ENCODE measurements at regions of chr12 and their contacts with region 1.

Region 1: GRCh38 chr12:76020731-76021672 is 10.6 kb downstream of the PHLDA1 start:
- DNase-seq: peak; percentile 23 to 91 (median 62)
- ATAC-seq: peak; percentile 79
- H3K4me3 ChIP-seq: peak overlapping the region in 1 of 2 experiments; percentile 9
- H3K4me3 Mint-ChIP-seq: peak overlapping the region; percentile 61
- H3K27ac ChIP-seq: peak overlapping the region; percentile 51 to 86
- H3K27ac Mint-ChIP-seq: peak overlapping the region; percentile 96
- H3K4me1 ChIP-seq: peaks cover 24% of the 10 kb centered on the region
- H3K4me1 Mint-ChIP-seq: peaks cover 24% of the 10 kb centered on the region
- H3K27me3 ChIP-seq: no peaks in the 10 kb centered on the region
- H3K27me3 Mint-ChIP-seq: no peaks in the 10 kb centered on the region
- CTCF ChIP-seq: no peak

Region 2: DNA sequence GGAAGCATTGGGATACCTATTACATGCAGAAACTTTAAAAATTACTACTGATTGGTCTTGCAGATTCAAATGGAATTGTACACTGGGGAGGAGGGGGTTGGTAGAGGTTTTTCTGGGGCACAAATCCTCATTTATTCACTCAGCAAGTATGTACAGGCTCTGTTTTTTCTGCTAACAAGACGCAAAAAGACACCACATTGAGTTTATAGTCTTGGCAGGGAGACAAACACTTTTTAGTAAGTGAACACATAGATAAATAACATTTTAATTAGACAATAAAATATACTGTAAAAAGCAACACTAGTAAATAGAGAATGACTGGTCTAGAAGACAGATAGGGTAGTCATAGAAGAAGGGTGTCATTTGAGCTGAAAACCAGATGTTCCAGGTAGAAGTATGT is 606.3 kb before region 1 on chr12:
- CTCF ChIA-PET with region 1: no interaction called
- POLR2A ChIA-PET with region 1: no interaction called
- intact Hi-C with region 1: no loop called
- DNase-seq: no peak
- ATAC-seq: no peak
- H3K4me3 ChIP-seq: no peak overlapping the region
- H3K4me3 Mint-ChIP-seq: no peak overlapping the region
- H3K27ac ChIP-seq: no peak overlapping the region
- H3K27ac Mint-ChIP-seq: no peak overlapping the region
- H3K4me1 ChIP-seq: no peaks in the 10 kb centered on the region
- H3K4me1 Mint-ChIP-seq: no peaks in the 10 kb centered on the region
- H3K27me3 ChIP-seq: no peaks in the 10 kb centered on the region
- H3K27me3 Mint-ChIP-seq: peaks cover 2% of the 10 kb centered on the region
- CTCF ChIP-seq: no peak

Region 3: GRCh38 chr12:75944097-75944904 is 76.7 kb before region 1 on chr12:
- CTCF ChIA-PET with region 1: no interaction called
- POLR2A ChIA-PET with region 1: no interaction called
- intact Hi-C with region 1: loop called in 1 of 2 experiments (anchors 2 kb)
- DNase-seq: peak in 2 of 9 experiments; percentile 48 to 62
- ATAC-seq: peak; percentile 84
- H3K4me3 ChIP-seq: no peak overlapping the region
- H3K4me3 Mint-ChIP-seq: no peak overlapping the region
- H3K27ac ChIP-seq: peak overlapping the region; percentile 7 to 60
- H3K27ac Mint-ChIP-seq: peak overlapping the region; percentile 89
- H3K4me1 ChIP-seq: peaks cover 11% of the 10 kb centered on the region
- H3K4me1 Mint-ChIP-seq: peaks cover 18% of the 10 kb centered on the region
- H3K27me3 ChIP-seq: no peaks in the 10 kb centered on the region
- H3K27me3 Mint-ChIP-seq: no peaks in the 10 kb centered on the region
- CTCF ChIP-seq: no peak

Region 4: GRCh38 chr12:75977952-75978671 is 42.9 kb before region 1 on chr12:
- CTCF ChIA-PET with region 1: no interaction called
- POLR2A ChIA-PET with region 1: interaction called, 11 read pairs
- intact Hi-C with region 1: loop called (anchors 1 to 2 kb)
- DNase-seq: peak; percentile 27 to 92 (median 75)
- ATAC-seq: peak; percentile 90
- H3K4me3 ChIP-seq: no peak overlapping the region
- H3K4me3 Mint-ChIP-seq: no peak overlapping the region
- H3K27ac ChIP-seq: peak overlapping the region in 1 of 2 experiments; percentile 63
- H3K27ac Mint-ChIP-seq: peak overlapping the region; percentile 71
- H3K4me1 ChIP-seq: peaks cover 23% of the 10 kb centered on the region
- H3K4me1 Mint-ChIP-seq: peaks cover 31% of the 10 kb centered on the region
- H3K27me3 ChIP-seq: no peaks in the 10 kb centered on the region
- H3K27me3 Mint-ChIP-seq: no peaks in the 10 kb centered on the region
- CTCF ChIP-seq: no peak

Region 5: GRCh38 chr12:76176940-76177339 is 155.9 kb after region 1 on chr12:
- CTCF ChIA-PET with region 1: no interaction called
- POLR2A ChIA-PET with region 1: no interaction called
- intact Hi-C with region 1: no loop called
- DNase-seq: no peak
- ATAC-seq: no peak
- H3K4me3 ChIP-seq: no peak overlapping the region
- H3K4me3 Mint-ChIP-seq: no peak overlapping the region
- H3K27ac ChIP-seq: no peak overlapping the region
- H3K27ac Mint-ChIP-seq: no peak overlapping the region
- H3K4me1 ChIP-seq: no peaks in the 10 kb centered on the region
- H3K4me1 Mint-ChIP-seq: no peaks in the 10 kb centered on the region
- H3K27me3 ChIP-seq: no peaks in the 10 kb centered on the region
- H3K27me3 Mint-ChIP-seq: peaks cover 3% of the 10 kb centered on the region
- CTCF ChIP-seq: no peak

Region 6: DNA sequence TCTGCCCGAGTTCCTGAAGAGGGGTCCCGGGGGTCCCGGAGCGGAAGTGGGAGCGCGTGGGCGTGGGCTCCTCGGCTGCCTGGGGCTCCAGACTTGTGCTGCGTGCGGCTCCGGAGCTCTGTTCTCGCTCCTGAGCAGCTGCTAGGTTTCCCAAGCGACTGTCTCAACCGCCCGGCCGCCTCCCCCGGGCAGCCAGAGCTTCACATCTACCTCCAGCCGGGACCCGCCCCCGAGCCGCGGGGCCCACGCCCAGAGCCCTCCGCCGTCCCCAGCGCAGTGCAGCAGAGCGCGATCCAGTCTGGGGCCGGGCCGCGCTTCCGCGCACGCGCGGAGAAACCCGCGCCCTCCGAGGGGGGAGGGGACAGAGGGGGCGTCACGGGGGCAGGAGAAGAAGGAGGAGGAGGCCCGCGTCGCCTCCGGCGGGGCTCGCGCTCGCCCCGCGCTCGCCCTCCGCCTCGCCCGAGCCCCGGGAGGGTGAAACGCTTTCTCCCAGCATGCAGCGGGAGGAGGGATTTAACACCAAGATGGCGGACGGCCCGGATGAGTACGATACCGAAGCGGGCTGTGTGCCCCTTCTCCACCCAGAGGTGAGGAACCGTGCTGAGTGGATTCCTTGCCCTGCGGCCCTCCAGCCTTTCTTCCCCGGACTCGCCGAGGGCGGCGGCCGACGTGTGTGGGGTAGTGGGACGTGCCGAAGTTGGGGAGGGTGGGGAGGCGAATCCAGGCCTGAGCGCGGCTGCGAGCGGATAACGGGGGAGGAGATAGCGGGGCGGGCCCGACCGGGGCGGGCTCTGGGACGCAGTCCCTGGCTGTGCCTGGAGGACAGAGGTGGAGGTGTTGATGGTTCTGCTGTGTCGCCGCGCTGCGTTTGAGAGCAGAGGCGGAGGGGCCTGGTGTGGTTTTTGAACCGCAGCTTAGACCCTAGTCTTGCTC is 743.0 kb after region 1 on chr12 and contains the start of gene ZDHHC17:
- CTCF ChIA-PET with region 1: no interaction called
- POLR2A ChIA-PET with region 1: no interaction called
- intact Hi-C with region 1: loop called in 1 of 2 experiments (anchors 5 kb)
- DNase-seq: peak; percentile 89 to 96 (median 93)
- ATAC-seq: peak; percentile 82
- H3K4me3 ChIP-seq: peak within 1 kb of the TSS; percentile 73 to 99
- H3K4me3 Mint-ChIP-seq: peak within 1 kb of the TSS; percentile 98
- H3K27ac ChIP-seq: peak within 1 kb of the TSS; percentile 87 to 94
- H3K27ac Mint-ChIP-seq: peak within 1 kb of the TSS; percentile 99
- H3K4me1 ChIP-seq: peaks cover 26% of the 10 kb centered on the region
- H3K4me1 Mint-ChIP-seq: peaks cover 47% of the 10 kb centered on the region
- H3K27me3 ChIP-seq: no peaks in the 10 kb centered on the region
- H3K27me3 Mint-ChIP-seq: no peaks in the 10 kb centered on the region
- CTCF ChIP-seq: no peak
- total RNA-seq, gene ZDHHC17: 38.1 to 40.3 TPM

Measured in CD8-positive, alpha-beta T cell (primary cell).